HEK293T (cell line): ENCODE measurements at regions of chr6 and their contacts with region 1.

Region 1: GRCh38 chr6:43075670-43076463 is at the start of gene PTK7:
- DNase-seq: peak; percentile 83

Region 2: GRCh38 chr6:43089874-43090558 is 14.1 kb after region 1 on chr6:
- CTCF ChIA-PET with region 1: no interaction called
- POLR2A ChIA-PET with region 1: interaction called, 13 read pairs
- DNase-seq: no peak

Region 3: GRCh38 chr6:43113431-43114260 is 37.8 kb after region 1 on chr6:
- CTCF ChIA-PET with region 1: no interaction called
- POLR2A ChIA-PET with region 1: interaction called, 17 read pairs
- DNase-seq: no peak